HEK293T (cell line): ENCODE measurements at regions of chr10 and their contacts with region 1.

Region 1: GRCh38 chr10:73886085-73886529 is 11.8 kb upstream of the CAMK2G start:
- DNase-seq: peak; percentile 86

Region 2: GRCh38 chr10:73772280-73773151 is 113.6 kb before region 1 on chr10:
- CTCF ChIA-PET with region 1: no interaction called
- POLR2A ChIA-PET with region 1: no interaction called
- DNase-seq: peak; percentile 63

Region 3: DNA sequence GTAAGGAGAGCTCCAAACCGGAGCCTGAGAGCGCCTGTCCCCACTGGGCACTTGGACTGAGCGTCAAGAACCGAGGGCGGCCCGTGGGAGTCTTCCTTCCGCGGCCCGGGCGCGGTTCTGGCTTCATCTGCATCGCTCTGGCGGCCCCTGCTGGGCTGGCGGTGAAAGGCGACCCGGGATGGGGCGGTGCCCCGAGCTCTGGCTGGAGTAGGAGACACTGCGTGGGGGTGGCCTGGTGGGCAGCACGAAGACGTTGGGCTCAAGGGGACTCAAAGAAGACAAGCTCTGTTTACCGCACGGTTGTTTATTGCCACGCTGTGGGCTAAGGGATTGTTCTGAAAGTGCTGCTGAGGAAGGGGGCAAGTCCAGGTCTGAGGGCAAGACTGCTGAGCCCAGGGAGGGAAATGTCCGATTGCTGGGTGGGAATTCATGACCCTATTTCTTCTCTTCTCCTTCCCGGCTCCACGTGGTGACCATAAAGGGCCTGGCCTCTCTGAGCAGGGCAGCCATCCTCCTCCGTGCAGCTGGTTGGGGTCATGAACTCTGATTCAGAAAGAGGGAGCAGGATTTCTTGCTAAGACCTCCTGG is 54.6 kb after region 1 on chr10:
- CTCF ChIA-PET with region 1: interaction called, 36 read pairs
- POLR2A ChIA-PET with region 1: interaction called, 10 read pairs
- DNase-seq: peak; percentile 84